ENCODE measurements at regions of chr17 and their contacts with region 1.

Region 1: DNA sequence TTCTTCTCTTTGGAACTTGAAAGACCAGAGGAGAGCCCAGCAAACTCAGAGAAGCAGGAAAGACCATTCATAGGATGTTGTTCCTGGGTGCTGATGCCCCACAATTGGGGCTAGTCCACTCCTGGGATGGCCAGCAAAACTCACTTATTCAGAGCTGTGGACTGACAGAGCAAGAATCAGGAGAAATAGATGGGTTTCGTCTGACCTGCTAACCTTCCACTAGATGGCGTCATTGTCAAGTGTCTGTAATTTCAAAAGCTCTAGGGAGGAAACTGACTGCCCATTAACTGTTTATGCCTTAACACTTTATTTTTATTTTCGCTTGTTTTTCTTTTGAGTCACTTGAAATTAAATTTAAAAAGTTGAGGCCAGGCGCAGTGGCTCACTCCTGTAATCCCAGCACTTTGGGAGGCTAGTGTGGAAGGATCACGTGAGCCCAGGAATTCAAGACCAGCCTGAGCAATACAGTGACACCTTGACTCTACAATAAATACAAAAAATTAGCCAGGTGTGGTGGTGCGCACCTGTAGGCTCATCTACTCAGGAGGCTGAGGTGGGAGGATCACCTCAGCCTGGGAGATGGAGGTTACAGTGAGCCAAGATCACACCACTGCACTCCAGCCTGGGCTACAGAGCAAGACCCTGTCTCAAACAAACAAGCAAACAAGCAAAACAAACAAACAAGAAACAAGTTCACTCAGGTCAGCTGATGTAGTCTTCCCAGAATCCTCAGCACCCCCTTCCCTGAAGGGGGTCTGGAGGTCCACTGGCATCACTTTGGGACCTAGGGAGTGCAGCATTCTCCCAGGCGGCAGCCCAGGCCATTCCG is 28.6 kb upstream of the MILR1 start:
- DNase-seq: no peak
- H3K4me3 Mint-ChIP-seq: no peak overlapping the region
- H3K27ac Mint-ChIP-seq: no peak overlapping the region
- H3K4me1 Mint-ChIP-seq: no peaks in the 10 kb centered on the region
- H3K27me3 Mint-ChIP-seq: no peaks in the 10 kb centered on the region

Region 2: GRCh38 chr17:64291254-64291851 is 129.0 kb before region 1 on chr17:
- CTCF ChIA-PET with region 1: interaction called, 31 read pairs
- intact Hi-C with region 1: no loop called
- DNase-seq: peak; percentile 28
- H3K4me3 Mint-ChIP-seq: no peak overlapping the region
- H3K27ac Mint-ChIP-seq: no peak overlapping the region
- H3K4me1 Mint-ChIP-seq: no peaks in the 10 kb centered on the region
- H3K27me3 Mint-ChIP-seq: no peaks in the 10 kb centered on the region

Region 3: GRCh38 chr17:64320613-64321553 is 99.5 kb before region 1 on chr17:
- CTCF ChIA-PET with region 1: interaction called, 140 read pairs
- intact Hi-C with region 1: loop called (anchors 1 kb)
- DNase-seq: peak; percentile 76
- H3K4me3 Mint-ChIP-seq: no peak overlapping the region
- H3K27ac Mint-ChIP-seq: no peak overlapping the region
- H3K4me1 Mint-ChIP-seq: peaks cover 11% of the 10 kb centered on the region
- H3K27me3 Mint-ChIP-seq: no peaks in the 10 kb centered on the region

Region 4: DNA sequence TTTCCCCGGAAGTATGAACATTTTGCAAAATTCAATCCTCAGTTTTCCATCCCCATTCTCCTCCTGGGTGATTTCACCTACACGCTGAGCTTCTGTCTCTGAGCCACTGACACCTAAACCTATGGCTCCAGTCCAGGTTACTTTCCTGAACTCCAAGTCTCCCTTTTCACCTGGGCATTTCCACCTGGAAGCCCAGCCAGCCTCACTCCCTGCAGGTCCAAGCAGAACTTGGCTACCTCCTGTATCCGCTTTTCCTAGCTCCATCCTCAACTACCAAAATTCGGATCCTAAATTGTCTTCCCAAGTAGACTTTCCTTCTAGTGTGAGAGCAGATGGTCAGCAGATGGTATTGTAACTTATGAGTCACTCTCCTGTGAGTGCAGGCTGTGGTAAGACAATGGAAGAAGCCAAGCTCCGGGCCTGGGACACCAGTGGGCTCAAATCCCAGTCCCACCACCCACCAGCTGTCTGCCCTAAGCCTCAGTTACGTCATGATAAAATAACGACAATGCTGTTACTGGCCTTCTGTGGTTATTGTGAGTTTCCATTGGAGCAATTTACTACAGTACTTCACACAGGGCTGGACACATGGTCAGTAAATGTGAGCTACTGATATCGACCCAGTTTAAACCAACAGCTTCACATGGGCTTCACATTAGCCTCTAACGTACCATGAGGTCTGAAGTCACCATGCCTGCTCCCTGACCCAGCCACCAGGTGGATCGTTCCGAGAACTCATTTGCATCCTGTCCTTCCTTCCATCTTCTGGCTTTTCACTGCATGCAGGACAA is 63.0 kb before region 1 on chr17:
- CTCF ChIA-PET with region 1: interaction called, 12 read pairs
- intact Hi-C with region 1: no loop called
- DNase-seq: no peak
- H3K4me3 Mint-ChIP-seq: no peak overlapping the region
- H3K27ac Mint-ChIP-seq: no peak overlapping the region
- H3K4me1 Mint-ChIP-seq: peaks cover 10% of the 10 kb centered on the region
- H3K27me3 Mint-ChIP-seq: no peaks in the 10 kb centered on the region

Region 5: DNA sequence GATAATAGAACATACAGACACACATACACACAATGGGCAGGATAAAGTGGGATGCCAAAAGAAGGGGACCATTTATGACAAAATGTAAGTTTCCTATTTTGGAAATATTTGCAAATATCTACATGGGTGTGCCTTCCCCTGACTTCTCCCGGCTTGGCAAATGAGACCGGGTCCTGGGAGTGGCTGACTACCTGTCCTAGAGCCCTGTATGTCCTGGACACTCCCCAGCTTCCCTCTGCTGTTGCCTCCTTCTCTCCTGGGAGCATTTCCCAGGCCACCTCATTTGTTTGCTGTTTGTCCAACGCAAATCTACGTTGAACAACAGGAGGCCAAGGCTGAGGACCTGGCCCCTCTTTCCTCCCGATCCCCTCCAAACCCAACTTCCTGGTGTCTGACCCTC is 46.6 kb before region 1 on chr17:
- CTCF ChIA-PET with region 1: no interaction called
- intact Hi-C with region 1: no loop called
- DNase-seq: no peak
- H3K4me3 Mint-ChIP-seq: no peak overlapping the region
- H3K27ac Mint-ChIP-seq: no peak overlapping the region
- H3K4me1 Mint-ChIP-seq: peaks cover 5% of the 10 kb centered on the region
- H3K27me3 Mint-ChIP-seq: no peaks in the 10 kb centered on the region

Region 6: GRCh38 chr17:64491034-64491859 is 70.9 kb after region 1 on chr17:
- CTCF ChIA-PET with region 1: interaction called, 114 read pairs
- intact Hi-C with region 1: loop called (anchors 1 kb)
- DNase-seq: peak; percentile 75
- H3K4me3 Mint-ChIP-seq: no peak overlapping the region
- H3K27ac Mint-ChIP-seq: no peak overlapping the region
- H3K4me1 Mint-ChIP-seq: peaks cover 31% of the 10 kb centered on the region
- H3K27me3 Mint-ChIP-seq: no peaks in the 10 kb centered on the region

Region 7: GRCh38 chr17:64599187-64599676 is 178.9 kb after region 1 on chr17:
- CTCF ChIA-PET with region 1: interaction called, 5 read pairs
- intact Hi-C with region 1: loop called (anchors 2 kb)
- DNase-seq: peak; percentile 77
- H3K4me3 Mint-ChIP-seq: peak overlapping the region; percentile 77
- H3K27ac Mint-ChIP-seq: peak overlapping the region; percentile 88
- H3K4me1 Mint-ChIP-seq: peaks cover 31% of the 10 kb centered on the region
- H3K27me3 Mint-ChIP-seq: no peaks in the 10 kb centered on the region

Region 8: GRCh38 chr17:64615028-64615677 is 194.8 kb after region 1 on chr17:
- CTCF ChIA-PET with region 1: no interaction called
- intact Hi-C with region 1: no loop called
- DNase-seq: no peak
- H3K4me3 Mint-ChIP-seq: no peak overlapping the region
- H3K27ac Mint-ChIP-seq: no peak overlapping the region
- H3K4me1 Mint-ChIP-seq: peaks cover 34% of the 10 kb centered on the region
- H3K27me3 Mint-ChIP-seq: no peaks in the 10 kb centered on the region

Region 9: GRCh38 chr17:64736804-64737492 is 316.6 kb after region 1 on chr17:
- CTCF ChIA-PET with region 1: interaction called, 34 read pairs
- intact Hi-C with region 1: loop called (anchors 1 kb)
- DNase-seq: peak; percentile 80
- H3K4me3 Mint-ChIP-seq: no peak overlapping the region
- H3K27ac Mint-ChIP-seq: no peak overlapping the region
- H3K4me1 Mint-ChIP-seq: peaks cover 13% of the 10 kb centered on the region
- H3K27me3 Mint-ChIP-seq: no peaks in the 10 kb centered on the region